ENCODE measurements at regions of chr7 and their contacts with region 1.

Region 1: DNA sequence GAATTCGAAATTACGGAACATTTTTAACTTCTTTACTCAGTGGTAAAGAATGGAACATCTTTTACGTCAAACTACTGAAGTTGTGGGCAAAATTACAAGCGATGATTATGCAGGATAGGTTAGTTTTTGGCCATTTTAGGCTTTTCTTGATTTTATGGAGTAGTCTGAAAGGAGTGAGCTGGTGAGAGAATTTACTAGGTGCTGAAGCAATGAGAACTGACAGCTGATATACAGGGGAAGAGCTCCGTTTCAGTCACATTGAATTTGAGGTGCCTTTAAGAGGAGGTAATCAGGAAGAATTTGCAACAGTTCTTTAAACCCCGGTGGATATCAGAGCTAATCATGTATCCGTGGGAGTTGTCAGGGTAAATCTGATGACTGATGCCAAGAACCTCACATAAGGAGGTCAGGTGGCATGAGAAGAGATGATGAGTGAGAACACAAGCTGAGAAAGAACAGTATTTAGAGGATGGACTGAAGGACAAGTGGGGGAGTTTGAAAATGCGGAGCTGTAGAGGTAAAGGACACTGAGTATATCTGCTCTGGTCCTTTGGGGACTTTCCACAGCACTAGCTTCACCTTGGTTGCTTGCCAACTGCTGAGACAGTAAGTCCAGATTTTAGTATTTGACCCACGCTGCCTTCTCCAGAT is 104.3 kb downstream of the AHR start:
- DNase-seq: peak; percentile 21
- ATAC-seq: peak; percentile 69
- H3K4me3 Mint-ChIP-seq: peak overlapping the region; percentile 17
- H3K27ac Mint-ChIP-seq: peak overlapping the region; percentile 83
- H3K4me1 Mint-ChIP-seq: peaks cover 28% of the 10 kb centered on the region
- H3K27me3 Mint-ChIP-seq: peaks cover 3% of the 10 kb centered on the region

Region 2: GRCh38 chr7:17139081-17139480 is 263.7 kb before region 1 on chr7:
- CTCF ChIA-PET with region 1: no interaction called
- POLR2A ChIA-PET with region 1: no interaction called
- intact Hi-C with region 1: loop called (anchors 2 to 5 kb)
- DNase-seq: no peak
- ATAC-seq: peak; percentile 83
- H3K4me3 Mint-ChIP-seq: no peak overlapping the region
- H3K27ac Mint-ChIP-seq: peak overlapping the region; percentile 91
- H3K4me1 Mint-ChIP-seq: peaks cover 74% of the 10 kb centered on the region
- H3K27me3 Mint-ChIP-seq: no peaks in the 10 kb centered on the region

Region 3: GRCh38 chr7:17144322-17144721 is 258.4 kb before region 1 on chr7:
- CTCF ChIA-PET with region 1: no interaction called
- POLR2A ChIA-PET with region 1: no interaction called
- intact Hi-C with region 1: loop called (anchors 2 to 5 kb)
- DNase-seq: peak; percentile 79
- ATAC-seq: peak; percentile 88
- H3K4me3 Mint-ChIP-seq: peak overlapping the region; percentile 53
- H3K27ac Mint-ChIP-seq: peak overlapping the region; percentile 83
- H3K4me1 Mint-ChIP-seq: peaks cover 51% of the 10 kb centered on the region
- H3K27me3 Mint-ChIP-seq: peaks cover 2% of the 10 kb centered on the region

Region 4: DNA sequence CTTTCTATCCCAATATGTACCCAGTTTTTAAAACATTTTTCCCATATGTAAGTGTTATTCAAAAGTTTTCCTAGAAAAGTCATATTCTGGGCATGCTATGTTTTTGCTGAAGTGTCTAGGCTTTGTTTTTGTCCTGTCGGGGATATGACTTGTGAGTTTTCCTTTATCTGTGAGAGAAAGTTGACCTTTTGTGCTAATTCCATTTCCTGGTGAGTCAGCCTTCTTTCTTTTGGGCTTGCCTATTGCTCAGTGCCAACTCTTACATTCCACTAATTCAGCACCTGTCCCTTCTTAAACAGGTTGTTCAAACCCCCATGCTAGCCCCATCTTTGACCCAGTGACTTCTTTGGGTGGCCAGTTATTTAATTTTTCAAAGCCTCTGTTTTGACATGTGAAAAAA is 41.9 kb after region 1 on chr7:
- CTCF ChIA-PET with region 1: interaction called, 3 read pairs
- POLR2A ChIA-PET with region 1: no interaction called
- intact Hi-C with region 1: loop called in 1 of 2 experiments (anchors 2 kb)
- DNase-seq: no peak
- ATAC-seq: no peak
- H3K4me3 Mint-ChIP-seq: no peak overlapping the region
- H3K27ac Mint-ChIP-seq: no peak overlapping the region
- H3K4me1 Mint-ChIP-seq: peaks cover 12% of the 10 kb centered on the region
- H3K27me3 Mint-ChIP-seq: peaks cover 12% of the 10 kb centered on the region

Measured in activated CD4-positive, alpha-beta T cell treated with anti-CD3 and anti-CD28 coated beads for 36 hours (primary cell).